CD4-positive, alpha-beta memory T cell (primary cell): ENCODE measurements at regions of chr2 and their contacts with region 1.

Region 1: GRCh38 chr2:36785179-36785795 is 88.8 kb downstream of the VIT start:
- DNase-seq: peak; percentile 40 to 66 (median 55)
- H3K4me3 ChIP-seq: no peak overlapping the region
- H3K4me3 Mint-ChIP-seq: no peak overlapping the region
- H3K27ac ChIP-seq: no peak overlapping the region
- H3K27ac Mint-ChIP-seq: peak overlapping the region in 1 of 7 donors; percentile 13
- H3K4me1 ChIP-seq: no peaks in the 10 kb centered on the region
- H3K4me1 Mint-ChIP-seq: peaks cover 0 to 3% (median 1%) of the 10 kb centered on the region in 4 donors
- H3K27me3 ChIP-seq: no peaks in the 10 kb centered on the region
- H3K27me3 Mint-ChIP-seq: peaks cover 17 to 20% of the 10 kb centered on the region in 2 donors

Region 2: DNA sequence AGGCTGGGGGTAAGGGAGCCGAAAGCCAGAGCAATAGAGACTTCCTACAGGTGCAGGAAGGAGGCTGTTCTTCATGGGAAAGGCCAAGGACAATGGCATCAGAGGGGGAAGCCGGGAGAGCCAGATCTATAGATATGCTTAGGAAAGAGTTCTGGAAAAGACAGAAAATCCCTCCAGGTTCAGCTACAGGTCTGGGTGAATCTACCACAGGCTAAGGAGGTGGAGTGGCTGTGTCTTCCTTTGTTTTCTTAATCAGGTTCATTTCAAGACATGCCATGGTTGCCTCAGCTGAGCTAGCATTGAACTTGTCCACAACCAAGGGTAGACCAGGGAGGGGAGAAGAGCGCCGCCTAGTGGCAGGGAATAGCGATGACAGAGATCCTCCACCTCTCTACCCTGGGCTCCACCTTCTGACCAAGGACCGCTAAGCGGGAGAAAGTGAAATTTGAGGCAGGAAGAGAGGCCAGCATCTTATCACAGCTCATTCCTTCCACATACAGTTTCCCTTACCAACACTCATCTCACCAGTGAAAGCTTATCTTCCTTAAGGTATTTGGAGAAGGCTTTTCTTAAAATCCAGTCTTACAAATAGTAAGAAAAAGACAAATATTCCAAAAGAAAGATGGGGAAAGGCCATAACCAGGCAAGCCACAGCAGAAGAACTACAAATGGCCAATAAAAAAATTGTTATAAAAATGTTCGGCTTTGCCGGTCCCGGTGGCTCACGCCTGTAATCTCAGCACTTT is 14.6 kb before region 1 on chr2:
- CTCF ChIA-PET with region 1: interaction called, 110 read pairs
- POLR2A ChIA-PET with region 1: no interaction called
- intact Hi-C with region 1: no loop called
- DNase-seq: peak in 2 of 5 donors; percentile 6 to 12
- H3K4me3 ChIP-seq: no peak overlapping the region
- H3K4me3 Mint-ChIP-seq: no peak overlapping the region
- H3K27ac ChIP-seq: no peak overlapping the region
- H3K27ac Mint-ChIP-seq: no peak overlapping the region
- H3K4me1 ChIP-seq: no peaks in the 10 kb centered on the region
- H3K4me1 Mint-ChIP-seq: no peaks in the 10 kb centered on the region
- H3K27me3 ChIP-seq: no peaks in the 10 kb centered on the region
- H3K27me3 Mint-ChIP-seq: peaks cover 4 to 8% of the 10 kb centered on the region in 2 donors

Region 3: DNA sequence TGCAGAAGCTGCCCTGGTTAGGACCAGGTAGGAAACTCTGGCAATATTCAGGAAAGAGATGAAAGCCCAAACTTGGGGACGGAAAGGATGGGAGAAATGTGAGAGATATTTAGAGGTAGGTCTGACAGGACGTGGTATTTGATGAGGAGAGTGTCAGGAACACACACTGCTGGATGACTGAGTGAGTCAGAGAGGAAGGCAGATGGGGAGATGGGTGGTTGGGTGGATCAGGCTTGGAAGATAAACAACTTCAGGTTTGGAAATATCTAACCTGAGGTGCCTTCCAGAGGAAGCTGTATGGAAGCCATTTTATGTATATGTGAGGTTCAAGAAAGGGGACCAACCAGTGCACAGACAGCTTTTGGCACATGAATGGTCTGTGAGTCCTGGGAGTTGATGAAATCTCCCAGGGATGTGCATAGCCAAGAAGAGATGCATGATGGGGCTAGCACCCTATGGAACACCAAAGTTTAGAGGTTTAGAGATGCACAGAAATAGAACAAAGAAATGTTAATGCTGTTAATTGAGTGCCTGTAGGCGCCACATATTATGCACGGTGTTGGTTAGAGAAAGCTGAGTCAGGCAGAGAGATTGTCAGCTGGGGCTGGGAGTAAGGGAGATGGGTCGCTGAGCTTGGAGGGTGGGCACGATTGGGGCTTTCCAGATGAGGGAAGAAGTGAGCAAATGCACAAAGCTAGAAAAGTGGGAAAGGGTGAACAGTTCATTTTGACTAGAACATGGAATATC is 12.2 kb after region 1 on chr2:
- CTCF ChIA-PET with region 1: interaction called, 110 read pairs
- POLR2A ChIA-PET with region 1: no interaction called
- intact Hi-C with region 1: no loop called
- DNase-seq: no peak
- H3K4me3 ChIP-seq: no peak overlapping the region
- H3K4me3 Mint-ChIP-seq: no peak overlapping the region
- H3K27ac ChIP-seq: no peak overlapping the region
- H3K27ac Mint-ChIP-seq: no peak overlapping the region
- H3K4me1 ChIP-seq: no peaks in the 10 kb centered on the region
- H3K4me1 Mint-ChIP-seq: peaks cover 9 to 12% (median 9%) of the 10 kb centered on the region in 4 donors
- H3K27me3 ChIP-seq: no peaks in the 10 kb centered on the region
- H3K27me3 Mint-ChIP-seq: peaks cover 14 to 24% of the 10 kb centered on the region in 2 donors

Region 4: GRCh38 chr2:38115216-38116032 is 1330.1 kb after region 1 on chr2:
- CTCF ChIA-PET with region 1: no interaction called
- POLR2A ChIA-PET with region 1: no interaction called
- intact Hi-C with region 1: loop called (anchors 10 kb)
- DNase-seq: peak; percentile 27 to 58 (median 29)
- H3K4me3 ChIP-seq: no peak overlapping the region
- H3K4me3 Mint-ChIP-seq: no peak overlapping the region
- H3K27ac ChIP-seq: no peak overlapping the region
- H3K27ac Mint-ChIP-seq: no peak overlapping the region
- H3K4me1 ChIP-seq: no peaks in the 10 kb centered on the region
- H3K4me1 Mint-ChIP-seq: no peaks in the 10 kb centered on the region
- H3K27me3 ChIP-seq: no peaks in the 10 kb centered on the region
- H3K27me3 Mint-ChIP-seq: peaks cover 20 to 26% of the 10 kb centered on the region in 2 donors